ENCODE measurements at regions of chr21 and their contacts with region 1.

Region 1: GRCh38 chr21:45973659-45974072 is 7.9 kb upstream of the COL6A1 start:
- DNase-seq: peak; percentile 91 to 96 (median 92)
- H3K4me3 ChIP-seq: peak overlapping the region; percentile 11 to 63 (median 56)
- H3K27ac ChIP-seq: peak overlapping the region; percentile 78 to 89
- H3K4me1 ChIP-seq: peaks cover 0 to 17% (median 0%) of the 10 kb centered on the region in 3 donors
- H3K27me3 ChIP-seq: no peaks in the 10 kb centered on the region
- CTCF ChIP-seq: peak; percentile 52

Region 2: DNA sequence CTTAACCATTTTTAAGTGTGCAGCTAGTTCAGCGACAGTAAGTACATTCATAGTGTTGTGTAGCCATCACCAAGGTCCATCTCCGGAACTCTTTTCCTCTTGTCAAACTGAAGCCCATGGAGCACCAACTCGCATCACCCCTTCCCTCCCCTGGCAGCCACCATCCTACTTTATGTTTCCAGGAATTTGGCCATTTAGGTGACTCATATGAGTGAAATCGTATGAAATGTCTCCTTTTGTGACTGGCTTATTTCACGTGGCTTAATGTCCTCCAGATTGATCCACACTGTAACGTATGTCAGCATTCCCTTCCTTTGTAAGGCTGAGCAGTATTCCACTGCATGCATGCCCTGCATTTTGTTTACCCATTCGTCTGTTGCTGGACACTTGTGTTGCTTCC is 126.8 kb after region 1 on chr21:
- intact Hi-C with region 1: loop called (anchors 10 kb)
- DNase-seq: no peak
- H3K4me3 ChIP-seq: no peak overlapping the region
- H3K27ac ChIP-seq: no peak overlapping the region
- H3K4me1 ChIP-seq: no peaks in the 10 kb centered on the region
- H3K27me3 ChIP-seq: no peaks in the 10 kb centered on the region
- CTCF ChIP-seq: no peak

Region 3: GRCh38 chr21:46122237-46122671 is 148.6 kb after region 1 on chr21:
- intact Hi-C with region 1: no loop called
- DNase-seq: peak in 2 of 5 donors; percentile 15 to 41
- H3K4me3 ChIP-seq: no peak overlapping the region
- H3K27ac ChIP-seq: no peak overlapping the region
- H3K4me1 ChIP-seq: no peaks in the 10 kb centered on the region
- H3K27me3 ChIP-seq: no peaks in the 10 kb centered on the region
- CTCF ChIP-seq: no peak

Region 4: DNA sequence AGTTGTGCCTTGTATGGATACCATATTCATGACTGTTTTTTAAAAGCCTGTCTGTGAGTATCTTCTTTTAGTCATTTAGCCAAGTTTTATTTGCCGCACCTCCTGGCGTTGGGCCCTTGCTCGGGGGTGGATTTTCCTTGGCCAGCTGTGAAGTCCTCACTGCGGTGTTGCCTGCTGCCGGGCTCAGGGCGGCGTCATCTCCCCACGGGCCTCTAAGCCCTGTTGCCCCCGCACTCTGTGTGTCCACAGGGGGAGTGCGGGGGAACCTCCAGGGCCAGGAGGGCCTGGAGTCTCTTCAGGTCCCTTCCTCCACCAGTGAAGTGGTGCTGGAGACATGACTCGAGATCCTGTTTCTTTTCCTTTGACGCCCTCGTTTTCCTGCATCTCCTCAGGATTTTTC is 419.3 kb after region 1 on chr21:
- intact Hi-C with region 1: no loop called
- DNase-seq: peak in 1 of 5 donors; percentile 47
- H3K4me3 ChIP-seq: no peak overlapping the region
- H3K27ac ChIP-seq: no peak overlapping the region
- H3K4me1 ChIP-seq: no peaks in the 10 kb centered on the region
- H3K27me3 ChIP-seq: no peaks in the 10 kb centered on the region
- CTCF ChIP-seq: no peak

Measured in kidney (tissue), 22 donors.